Mammary epithelial cell (primary cell): ENCODE measurements at regions of chr6 and their contacts with region 1.

Region 1: GRCh38 chr6:166644681-166645080 is 17.6 kb upstream of the RPS6KA2 start:
- DNase-seq: no peak
- H3K4me3 ChIP-seq: no peak overlapping the region
- H3K27ac ChIP-seq: no peak overlapping the region
- H3K4me1 ChIP-seq: peaks cover 6% of the 10 kb centered on the region
- H3K27me3 ChIP-seq: no peaks in the 10 kb centered on the region
- CTCF ChIP-seq: no peak

Region 2: DNA sequence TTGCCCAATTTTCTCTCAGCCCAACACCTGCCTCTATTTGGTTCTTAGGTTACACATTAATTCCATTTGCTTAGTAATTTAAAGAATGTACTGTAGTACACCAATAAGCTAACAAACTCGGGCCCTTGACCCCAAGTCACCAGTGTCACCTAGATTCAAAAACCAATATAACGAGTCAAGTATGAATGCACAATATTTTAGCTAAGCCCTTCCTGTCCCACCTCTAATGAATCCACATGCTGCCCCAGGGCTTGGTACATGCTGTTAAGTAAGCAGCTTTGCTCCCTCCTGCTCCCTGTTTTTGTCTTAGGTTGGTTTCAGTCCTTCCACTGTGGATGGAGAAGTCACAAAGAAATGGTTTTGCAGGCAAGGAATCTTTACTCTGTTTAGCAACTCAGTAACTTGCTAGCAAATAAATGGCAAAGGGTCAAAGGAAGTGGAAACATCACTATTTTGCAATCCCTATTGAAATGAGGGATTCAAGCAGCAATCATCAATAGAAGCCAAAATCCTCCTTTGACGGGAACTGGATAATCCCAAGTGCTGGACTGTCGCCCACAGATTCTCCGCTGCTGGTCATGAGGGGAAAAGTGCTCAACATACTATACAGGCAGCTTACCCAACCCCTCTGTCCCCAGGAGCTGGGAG is 256.9 kb before region 1 on chr6:
- CTCF ChIA-PET with region 1: no interaction called
- dilution Hi-C with region 1: no loop called
- in situ Hi-C with region 1: no loop called
- intact Hi-C with region 1: no loop called
- DNase-seq: no peak
- H3K4me3 ChIP-seq: no peak overlapping the region
- H3K27ac ChIP-seq: no peak overlapping the region
- H3K4me1 ChIP-seq: no peaks in the 10 kb centered on the region
- H3K27me3 ChIP-seq: no peaks in the 10 kb centered on the region
- CTCF ChIP-seq: no peak

Region 3: GRCh38 chr6:166572370-166573261 is 72.1 kb before region 1 on chr6:
- CTCF ChIA-PET with region 1: no interaction called
- dilution Hi-C with region 1: no loop called
- in situ Hi-C with region 1: no loop called
- intact Hi-C with region 1: no loop called
- DNase-seq: no peak
- H3K4me3 ChIP-seq: no peak overlapping the region
- H3K27ac ChIP-seq: no peak overlapping the region
- H3K4me1 ChIP-seq: peaks cover 6% of the 10 kb centered on the region
- H3K27me3 ChIP-seq: no peaks in the 10 kb centered on the region
- CTCF ChIP-seq: no peak

Region 4: DNA sequence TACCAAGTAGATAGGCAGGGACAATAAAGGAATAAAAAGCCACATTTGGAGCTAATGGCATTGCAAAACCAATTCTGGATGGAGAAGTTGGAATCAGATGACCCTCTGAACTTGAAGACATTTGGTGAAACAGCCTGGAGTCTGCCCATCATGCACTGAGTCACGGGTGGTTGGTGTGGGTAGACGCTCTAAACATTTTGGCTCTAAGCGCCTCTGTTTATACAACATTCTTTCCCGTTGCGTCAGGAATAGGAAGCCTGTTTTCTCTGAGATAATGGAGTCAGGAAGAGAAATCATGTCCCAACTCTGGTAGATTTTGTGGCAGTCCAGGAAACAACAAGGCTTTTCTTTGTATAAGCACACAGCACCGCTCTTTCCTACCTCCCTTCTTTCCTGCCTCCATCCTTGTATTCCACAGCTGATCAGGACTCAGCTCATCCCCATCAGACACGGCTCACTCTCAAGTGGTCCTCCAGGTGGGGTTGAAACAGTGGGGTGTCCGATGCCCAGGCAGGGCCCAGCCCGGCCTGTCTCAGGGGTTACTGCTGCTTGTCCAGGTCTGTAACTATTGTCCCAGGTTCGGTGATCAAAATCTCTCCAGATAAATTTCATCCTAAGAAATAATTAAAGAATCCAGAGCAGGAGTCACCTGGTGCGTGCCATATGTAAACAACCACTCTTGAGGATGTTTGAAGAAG is 46.1 kb before region 1 on chr6:
- CTCF ChIA-PET with region 1: no interaction called
- dilution Hi-C with region 1: no loop called
- in situ Hi-C with region 1: no loop called
- intact Hi-C with region 1: no loop called
- DNase-seq: peak; percentile 17
- H3K4me3 ChIP-seq: no peak overlapping the region
- H3K27ac ChIP-seq: no peak overlapping the region
- H3K4me1 ChIP-seq: no peaks in the 10 kb centered on the region
- H3K27me3 ChIP-seq: no peaks in the 10 kb centered on the region
- CTCF ChIP-seq: no peak

Region 5: DNA sequence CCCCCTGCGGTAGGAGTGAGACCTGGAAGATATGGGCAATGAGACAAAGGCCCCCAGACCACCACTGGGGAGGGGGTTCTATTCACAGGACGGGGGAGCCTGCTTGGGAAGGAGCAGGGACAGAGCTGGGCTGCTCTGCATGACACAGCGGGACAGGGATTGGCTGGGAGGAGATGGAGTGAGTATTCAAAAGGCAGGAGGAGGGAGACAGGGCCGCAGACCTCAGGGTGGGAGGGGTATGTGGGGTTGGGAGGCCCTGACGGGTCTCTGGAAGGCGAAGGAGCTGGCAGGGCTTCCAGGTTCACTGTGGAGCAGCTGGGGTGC is 43.2 kb after region 1 on chr6:
- CTCF ChIA-PET with region 1: no interaction called
- dilution Hi-C with region 1: loop called (anchors 5 kb)
- in situ Hi-C with region 1: no loop called
- intact Hi-C with region 1: no loop called
- DNase-seq: no peak
- H3K4me3 ChIP-seq: no peak overlapping the region
- H3K27ac ChIP-seq: no peak overlapping the region
- H3K4me1 ChIP-seq: peaks cover 7% of the 10 kb centered on the region
- H3K27me3 ChIP-seq: no peaks in the 10 kb centered on the region
- CTCF ChIP-seq: no peak